BJ (cell line): ENCODE measurements at regions of chr5 and their contacts with region 1.

Region 1: GRCh38 chr5:39424736-39425637 is at the start of gene DAB2:
- DNase-seq: peak; percentile 91
- H3K4me3 ChIP-seq: peak within 1 kb of the TSS; percentile 73
- H3K27me3 ChIP-seq: no peaks in the 10 kb centered on the region
- CTCF ChIP-seq: peak; percentile 82
- polyA plus RNA-seq, gene DAB2: 168 and 181 TPM in 2 replicates

Region 2: DNA sequence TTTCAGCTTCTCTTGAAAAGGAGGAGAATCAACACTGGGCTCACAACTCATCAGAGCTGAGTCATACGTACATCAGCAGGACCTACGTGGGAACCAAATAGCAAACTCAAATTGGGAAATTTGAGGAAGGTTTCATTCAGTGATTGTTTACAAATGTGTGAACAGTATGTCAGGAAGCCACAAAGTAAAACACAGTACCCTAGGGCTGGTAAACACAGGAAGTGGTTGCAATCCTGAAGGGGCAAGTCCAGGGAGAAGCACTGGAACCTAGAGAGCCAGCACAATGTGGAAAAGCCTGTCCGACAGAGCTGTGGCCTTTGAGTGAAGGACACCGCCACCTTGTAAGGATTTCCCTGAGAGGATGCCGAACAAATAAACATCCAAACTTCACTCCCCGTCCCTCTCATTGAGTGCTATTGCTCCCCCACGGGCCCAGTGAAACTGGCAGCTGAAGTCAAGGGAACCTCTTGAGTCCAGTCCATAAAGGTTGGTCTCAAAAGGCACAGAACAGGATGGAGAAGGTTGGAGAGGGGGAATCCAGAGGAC is 324.1 kb before region 1 on chr5:
- CTCF ChIA-PET with region 1: no interaction called
- POLR2A ChIA-PET with region 1: no interaction called
- DNase-seq: peak; percentile 95
- H3K4me3 ChIP-seq: no peak overlapping the region
- H3K27me3 ChIP-seq: no peaks in the 10 kb centered on the region
- CTCF ChIP-seq: no peak

Region 3: DNA sequence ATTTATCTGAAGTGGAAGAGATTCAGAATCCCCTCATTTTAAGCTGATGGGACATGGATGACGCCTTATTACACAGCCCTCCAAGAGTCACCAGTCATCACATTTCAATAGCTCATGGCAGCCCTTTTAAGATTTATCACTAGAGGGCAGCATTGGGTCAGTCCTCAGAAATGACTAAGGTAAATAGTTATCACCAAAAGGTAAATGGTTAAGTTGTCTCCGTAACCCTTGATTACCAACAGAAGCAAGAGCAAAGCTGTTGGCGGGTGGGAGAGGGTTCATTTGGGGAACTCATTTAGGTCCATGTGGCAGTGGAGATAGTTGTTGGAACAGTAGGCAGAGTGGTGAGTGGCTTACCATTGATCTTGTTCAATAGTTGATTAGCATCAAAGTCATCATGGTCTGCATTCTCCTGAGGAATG is 48.7 kb before region 1 on chr5:
- CTCF ChIA-PET with region 1: interaction called, 13 read pairs
- POLR2A ChIA-PET with region 1: interaction called, 18 read pairs
- DNase-seq: no peak
- H3K4me3 ChIP-seq: no peak overlapping the region
- H3K27me3 ChIP-seq: no peaks in the 10 kb centered on the region
- CTCF ChIP-seq: peak; percentile 66

Region 4: DNA sequence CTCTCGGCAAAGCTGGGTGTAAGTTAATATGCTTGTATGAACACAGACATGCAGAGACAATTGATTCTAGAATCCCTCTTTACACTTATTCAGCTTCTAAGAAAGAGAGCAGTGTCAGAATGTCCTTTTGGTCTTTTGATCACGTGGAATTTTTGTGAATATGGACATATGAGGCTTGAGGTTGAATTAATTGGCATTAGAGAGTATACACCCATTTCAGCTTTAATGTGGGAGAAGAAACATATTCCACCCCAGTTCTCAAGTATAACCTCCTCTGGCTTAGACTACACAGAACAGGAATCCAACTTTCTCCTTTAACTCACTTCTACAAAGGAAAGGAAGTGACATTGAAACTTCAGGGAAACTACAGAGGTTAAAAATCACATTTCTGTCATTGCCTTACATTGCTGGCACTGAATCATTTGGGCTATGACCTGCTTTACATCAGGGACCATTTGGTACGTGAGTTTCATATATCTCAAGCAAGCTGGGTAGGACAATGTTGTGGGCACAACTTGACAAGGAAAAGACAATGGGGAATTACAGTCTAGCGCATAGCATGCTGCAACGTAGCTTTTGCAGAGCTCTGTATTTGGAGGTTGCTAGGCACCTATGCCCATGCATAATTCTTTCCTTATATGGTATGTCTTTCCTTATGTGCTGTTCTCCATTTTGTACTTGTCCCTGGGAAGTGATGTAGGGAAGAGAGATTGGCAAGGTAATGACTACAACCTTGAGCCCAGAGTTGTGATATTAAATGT is 19.7 kb before region 1 on chr5:
- CTCF ChIA-PET with region 1: interaction called, 13 read pairs
- POLR2A ChIA-PET with region 1: interaction called, 13 read pairs
- DNase-seq: no peak
- H3K4me3 ChIP-seq: no peak overlapping the region
- H3K27me3 ChIP-seq: no peaks in the 10 kb centered on the region
- CTCF ChIP-seq: no peak

Region 5: DNA sequence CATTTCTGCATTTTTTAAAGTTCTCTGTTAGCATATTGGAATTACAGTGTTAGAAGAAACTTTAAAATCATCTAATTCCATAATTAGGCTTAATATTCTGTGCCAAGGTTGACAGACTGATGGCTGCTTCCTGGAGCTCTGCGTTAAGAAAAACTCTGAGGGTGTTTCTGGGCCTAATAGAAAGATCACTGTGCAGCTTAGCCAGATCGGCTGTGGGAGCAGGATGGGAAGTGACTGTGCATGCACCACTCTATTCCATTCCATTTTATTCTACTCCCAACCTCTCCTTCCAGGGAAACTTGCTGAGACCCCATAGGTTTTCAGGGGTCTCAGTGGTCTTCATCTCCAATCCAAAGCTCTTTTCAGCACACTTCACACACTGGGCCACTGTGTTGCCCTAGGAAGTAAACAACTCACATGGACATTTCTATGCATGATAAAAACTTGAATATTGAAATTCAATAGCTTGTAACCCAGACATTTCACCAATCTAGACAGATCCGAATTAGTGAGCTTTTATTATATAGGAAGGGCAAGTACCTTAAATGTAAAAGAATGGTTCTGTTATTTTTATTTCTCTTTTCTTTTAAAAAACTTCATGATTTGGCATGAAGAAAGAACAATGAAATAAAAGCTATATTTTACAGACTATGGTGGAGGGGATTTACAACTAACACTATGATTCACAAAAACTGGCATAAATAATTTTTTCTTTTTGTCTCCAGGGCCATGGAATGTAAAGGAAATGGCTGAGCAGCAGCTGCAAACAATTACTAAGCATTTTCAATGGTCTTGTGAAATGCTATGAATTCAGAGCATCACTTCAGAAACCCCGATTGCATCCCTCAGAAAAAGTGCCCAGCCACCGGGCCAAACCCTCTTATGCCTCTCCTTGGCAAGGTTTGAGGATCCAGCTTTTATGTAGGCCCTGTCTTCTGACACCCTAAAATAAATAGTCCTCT is 51.2 kb after region 1 on chr5:
- CTCF ChIA-PET with region 1: no interaction called
- POLR2A ChIA-PET with region 1: interaction called, 10 read pairs
- DNase-seq: peak; percentile 68
- H3K4me3 ChIP-seq: no peak overlapping the region
- H3K27me3 ChIP-seq: no peaks in the 10 kb centered on the region
- CTCF ChIP-seq: no peak

Region 6: GRCh38 chr5:39547553-39548154 is 122.7 kb after region 1 on chr5:
- CTCF ChIA-PET with region 1: interaction called, 47 read pairs
- POLR2A ChIA-PET with region 1: interaction called, 11 read pairs
- DNase-seq: no peak
- H3K4me3 ChIP-seq: no peak overlapping the region
- H3K27me3 ChIP-seq: no peaks in the 10 kb centered on the region
- CTCF ChIP-seq: peak; percentile 67